Heart right ventricle (tissue), 16 donors: ENCODE measurements at regions of chr12 and their contacts with region 1.

Region 1: DNA sequence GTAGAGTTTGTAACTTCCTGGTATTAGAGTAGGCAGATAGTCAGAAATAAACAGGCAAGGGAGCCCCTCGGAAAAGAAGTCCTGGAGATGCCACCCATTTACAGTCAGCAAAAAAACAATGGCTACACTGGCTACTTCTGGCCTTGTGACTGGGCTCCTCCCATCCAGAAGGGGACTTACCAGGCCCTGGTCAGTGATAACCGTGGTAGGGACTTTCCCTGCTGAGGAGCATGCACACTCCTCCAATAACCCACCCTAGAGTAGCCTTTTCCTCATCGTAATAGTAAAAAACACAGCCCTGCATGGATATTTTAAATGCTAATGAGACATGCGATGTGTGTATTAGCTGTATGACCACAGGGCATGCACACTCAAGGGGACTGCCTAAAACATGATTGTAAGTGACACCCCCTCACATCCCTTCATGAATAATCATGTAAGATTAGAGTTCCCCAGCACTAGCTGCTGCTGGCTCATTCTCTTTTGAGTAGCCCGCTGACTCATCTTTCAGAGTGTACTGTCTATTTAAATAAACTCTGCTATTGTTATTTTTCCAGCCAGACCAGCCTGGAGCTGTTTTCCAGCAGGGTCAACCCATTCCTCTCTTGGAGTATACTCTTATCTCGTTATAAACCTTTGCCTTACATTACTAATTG is 413.8 kb upstream of the TMTC1 start:
- DNase-seq: no peak
- ATAC-seq: no peak
- H3K4me3 ChIP-seq: no peak overlapping the region
- H3K27ac ChIP-seq: no peak overlapping the region
- H3K4me1 ChIP-seq: peaks cover 0 to 12% (median 0%) of the 10 kb centered on the region in 9 donors
- H3K27me3 ChIP-seq: peaks cover 4 to 47% (median 27%) of the 10 kb centered on the region in 7 donors
- CTCF ChIP-seq: no peak

Region 2: GRCh38 chr12:29796823-29797263 is 400.7 kb before region 1 on chr12:
- intact Hi-C with region 1: loop called in 1 of 10 experiments (anchors 10 kb)
- DNase-seq: peak in 1 of 2 donors; percentile 50
- ATAC-seq: peak in 7 of 8 donors; percentile 69 to 90 (median 84)
- H3K4me3 ChIP-seq: no peak overlapping the region
- H3K27ac ChIP-seq: peak overlapping the region in 4 of 10 donors; percentile 10 to 62 (median 39)
- H3K4me1 ChIP-seq: peaks cover 0 to 16% (median 4%) of the 10 kb centered on the region in 9 donors
- H3K27me3 ChIP-seq: no peaks in the 10 kb centered on the region
- CTCF ChIP-seq: no peak